ENCODE measurements at regions of chr15 and their contacts with region 1.

Region 1: GRCh38 chr15:89087830-89088604 is at the start of gene ABHD2:
- DNase-seq: peak; percentile 100
- H3K4me3 Mint-ChIP-seq: no peak within 1 kb of the TSS
- H3K27ac Mint-ChIP-seq: peak within 1 kb of the TSS; percentile 84
- H3K4me1 Mint-ChIP-seq: peaks cover 46% of the 10 kb centered on the region
- H3K27me3 Mint-ChIP-seq: no peaks in the 10 kb centered on the region
- CTCF ChIP-seq: no peak
- total RNA-seq, gene ABHD2: 300 and 353 TPM in 2 replicates

Region 2: DNA sequence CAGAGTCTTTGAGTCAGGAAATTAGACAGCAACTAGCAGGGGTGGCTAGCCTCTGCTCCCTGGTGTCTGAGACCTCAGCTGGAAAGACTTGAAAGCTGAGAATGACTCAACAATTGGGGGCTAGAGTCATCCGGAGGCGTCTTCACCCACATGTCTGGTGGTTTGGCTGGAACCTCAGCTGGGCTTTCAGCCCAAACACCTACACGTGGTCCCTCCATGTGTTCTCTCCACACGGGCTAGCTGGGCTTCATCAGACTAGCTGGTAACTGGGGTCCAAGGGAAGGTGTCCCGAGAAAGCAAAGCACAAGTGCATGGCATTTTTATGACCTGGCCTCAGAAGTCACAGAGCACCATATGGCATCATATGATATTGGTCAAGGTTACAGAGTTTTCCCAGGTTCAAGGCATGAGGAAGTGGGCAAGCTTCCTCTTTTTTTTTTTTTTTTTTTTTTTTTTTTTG is 19.7 kb before region 1 on chr15:
- CTCF ChIA-PET with region 1: interaction called, 21 read pairs
- intact Hi-C with region 1: loop called (anchors 2 kb)
- DNase-seq: peak; percentile 45
- H3K4me3 Mint-ChIP-seq: no peak overlapping the region
- H3K27ac Mint-ChIP-seq: peak overlapping the region; percentile 88
- H3K4me1 Mint-ChIP-seq: peaks cover 61% of the 10 kb centered on the region
- H3K27me3 Mint-ChIP-seq: no peaks in the 10 kb centered on the region
- CTCF ChIP-seq: no peak

Region 3: DNA sequence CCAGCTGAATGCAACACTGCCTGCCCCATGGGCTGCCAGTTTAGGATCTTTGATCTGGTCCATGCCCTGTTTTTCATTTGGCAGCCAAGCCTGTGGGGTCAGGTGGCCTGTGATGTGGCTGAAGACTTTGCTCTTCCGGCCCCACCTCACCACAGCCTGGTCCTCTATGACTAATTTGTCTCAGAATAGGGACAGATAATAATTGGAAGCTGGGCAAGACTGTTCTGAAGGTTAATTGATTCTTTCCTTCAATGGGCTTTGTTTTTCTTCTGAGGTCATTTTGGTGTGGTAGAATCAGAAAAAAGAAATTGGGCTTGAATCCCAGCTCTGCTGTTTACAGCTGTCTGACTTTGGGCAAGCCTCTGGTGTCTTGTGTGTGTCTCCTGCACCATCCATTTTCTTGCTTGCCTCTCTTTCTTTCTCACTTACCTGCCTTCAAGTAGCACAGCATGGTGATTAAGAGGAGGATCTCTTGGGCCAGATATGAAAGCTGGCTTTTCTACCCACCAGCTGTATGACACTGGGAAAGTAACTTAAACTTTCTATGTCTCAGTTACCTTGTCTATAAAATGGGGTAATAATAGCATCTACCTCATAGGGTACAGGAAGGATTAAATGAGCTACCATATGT is 24.4 kb after region 1 on chr15:
- CTCF ChIA-PET with region 1: interaction called, 16 read pairs
- intact Hi-C with region 1: no loop called
- DNase-seq: peak; percentile 85
- H3K4me3 Mint-ChIP-seq: peak overlapping the region; percentile 8
- H3K27ac Mint-ChIP-seq: peak overlapping the region; percentile 87
- H3K4me1 Mint-ChIP-seq: peaks cover 77% of the 10 kb centered on the region
- H3K27me3 Mint-ChIP-seq: no peaks in the 10 kb centered on the region
- CTCF ChIP-seq: no peak

Region 4: DNA sequence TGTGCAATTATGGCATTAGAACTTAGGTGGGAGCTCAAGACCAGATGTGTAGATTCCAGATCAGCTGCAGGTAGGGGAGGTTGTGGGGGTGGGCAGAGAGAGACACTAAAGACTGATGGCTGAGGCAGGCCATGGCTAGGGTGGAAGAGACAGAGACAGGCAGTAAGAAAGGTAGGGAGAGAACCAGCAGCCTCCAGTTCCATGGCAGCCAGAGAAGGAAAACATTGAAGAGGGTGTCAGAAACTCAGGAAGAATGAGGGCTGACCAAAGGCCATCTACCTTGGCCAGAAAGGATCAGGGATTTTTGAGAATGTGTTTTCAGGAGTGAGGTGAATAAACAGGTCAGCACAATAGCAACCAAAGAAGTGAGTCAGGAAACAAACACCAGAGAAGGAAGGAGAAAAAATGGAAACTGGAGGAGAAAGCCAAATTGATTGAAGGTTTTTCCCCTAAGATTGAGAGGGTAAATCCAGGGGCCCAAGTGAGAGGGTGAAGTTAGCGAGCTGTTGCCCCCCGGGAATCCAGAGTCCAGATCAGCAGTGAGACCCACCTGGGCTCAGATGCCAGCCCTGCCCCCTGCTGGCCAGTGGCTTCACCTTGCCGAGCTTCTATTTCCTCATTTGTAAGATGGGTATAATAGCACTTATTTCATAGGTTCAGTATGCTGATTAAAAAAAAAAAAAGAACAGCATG is 41.3 kb after region 1 on chr15:
- CTCF ChIA-PET with region 1: interaction called, 12 read pairs
- intact Hi-C with region 1: loop called (anchors 1 kb)
- DNase-seq: peak; percentile 78
- H3K4me3 Mint-ChIP-seq: no peak overlapping the region
- H3K27ac Mint-ChIP-seq: no peak overlapping the region
- H3K4me1 Mint-ChIP-seq: peaks cover 35% of the 10 kb centered on the region
- H3K27me3 Mint-ChIP-seq: no peaks in the 10 kb centered on the region
- CTCF ChIP-seq: peak; percentile 79

Region 5: GRCh38 chr15:89462331-89462912 is 374.4 kb after region 1 on chr15:
- CTCF ChIA-PET with region 1: no interaction called
- intact Hi-C with region 1: no loop called
- DNase-seq: no peak
- H3K4me3 Mint-ChIP-seq: no peak overlapping the region
- H3K27ac Mint-ChIP-seq: no peak overlapping the region
- H3K4me1 Mint-ChIP-seq: no peaks in the 10 kb centered on the region
- H3K27me3 Mint-ChIP-seq: peaks cover 54% of the 10 kb centered on the region
- CTCF ChIP-seq: no peak

Measured in Calu3 (cell line).